H1 (cell line): ENCODE measurements at regions of chr17 and their contacts with region 1.

Region 1: DNA sequence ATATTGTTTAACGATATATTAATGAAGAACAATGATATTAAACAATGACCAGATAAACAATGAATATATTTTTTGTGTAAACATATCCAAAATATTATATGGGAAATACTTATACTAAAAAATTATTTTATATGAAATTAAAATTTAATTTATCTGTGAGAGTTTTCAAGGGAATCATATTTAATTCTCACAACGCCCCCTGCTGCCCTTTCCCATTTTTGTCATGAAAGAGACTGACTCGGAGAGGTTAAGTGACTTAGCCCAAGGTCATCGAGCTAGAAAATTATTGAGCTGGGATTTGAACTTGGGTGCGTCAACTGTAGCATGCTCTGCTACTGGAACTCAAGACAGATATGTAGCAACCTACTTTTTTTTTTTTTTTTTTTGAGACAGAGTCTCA is 7.2 kb upstream of the MYCBPAP start:
- DNase-seq: no peak
- H3K4me3 ChIP-seq: no peak overlapping the region
- H3K27ac ChIP-seq: no peak overlapping the region
- H3K4me1 ChIP-seq: peaks cover 5 to 9% (median 6%) of the 10 kb centered on the region in 4 experiments; a peak in 6 of 7 replicates
- H3K27me3 ChIP-seq: no peaks in the 10 kb centered on the region
- CTCF ChIP-seq: peak in 2 of 3 experiments; percentile 11 to 43; a peak in 2 of 4 replicates
- EP300 ChIP-seq: no peak
- POLR2A ChIP-seq: no peak
- RAD21 ChIP-seq: 0 out of 4 replicates have a peak, but pooled peaks of 1 of the 2 experiments have one; percentile 13

Region 2: GRCh38 chr17:50345432-50346312 is 155.4 kb before region 1 on chr17 and contains the start of gene XYLT2:
- CTCF ChIA-PET with region 1: no interaction called
- POLR2A ChIA-PET with region 1: no interaction called
- DNase-seq: peak in 1 of 2 experiments; percentile 89
- H3K4me3 ChIP-seq: peak within 1 kb of the TSS; percentile 81 to 93 (median 88)
- H3K27ac ChIP-seq: peak within 1 kb of the TSS; percentile 80; the same call in 1 of the 2 replicates
- H3K4me1 ChIP-seq: peaks cover 4 to 17% (median 11%) of the 10 kb centered on the region in 4 experiments
- H3K27me3 ChIP-seq: peaks cover 0 to 9% (median 5%) of the 10 kb centered on the region in 4 experiments; a peak in 4 of 7 replicates
- CTCF ChIP-seq: no peak
- EP300 ChIP-seq: no peak
- POLR2A ChIP-seq: peak; percentile 51 to 60
- RAD21 ChIP-seq: no peak
- total RNA-seq, gene XYLT2: 28.0 and 28.9 TPM in 2 replicates

Region 3: DNA sequence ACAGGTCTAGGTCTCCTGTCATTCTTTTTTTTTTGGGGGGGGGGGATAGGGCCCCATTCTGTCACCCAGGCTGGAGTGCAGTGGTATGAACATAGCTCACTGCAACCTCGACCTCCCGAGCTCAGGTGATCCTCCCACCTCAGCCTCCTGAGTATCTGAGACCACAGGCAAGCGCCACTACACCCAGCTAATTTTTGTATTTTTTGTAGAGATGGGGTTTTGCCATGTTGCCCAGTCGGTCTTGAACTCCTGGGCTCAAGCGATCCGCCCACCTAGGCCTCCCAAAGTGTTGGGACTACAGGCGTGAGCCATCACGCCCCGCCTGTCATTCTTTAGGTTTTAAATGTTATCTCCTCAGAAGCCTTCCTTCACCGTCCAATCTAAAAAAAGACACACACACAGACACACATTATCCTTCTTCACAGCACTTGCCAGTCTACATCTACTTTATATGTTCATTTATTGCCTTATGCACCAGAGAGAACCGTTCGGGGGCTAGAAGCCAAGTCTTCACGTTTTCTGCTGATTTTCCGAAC is 128.8 kb before region 1 on chr17:
- CTCF ChIA-PET with region 1: no interaction called
- POLR2A ChIA-PET with region 1: no interaction called
- DNase-seq: no peak
- H3K4me3 ChIP-seq: peak overlapping the region; percentile 86 to 97 (median 92)
- H3K27ac ChIP-seq: peak overlapping the region; percentile 97
- H3K4me1 ChIP-seq: peaks cover 0 to 9% (median under 1%) of the 10 kb centered on the region in 4 experiments; a peak in 2 of 7 replicates
- H3K27me3 ChIP-seq: no peaks in the 10 kb centered on the region
- CTCF ChIP-seq: no peak
- EP300 ChIP-seq: no peak
- POLR2A ChIP-seq: no peak
- RAD21 ChIP-seq: no peak

Region 4: GRCh38 chr17:50518384-50519230 is 17.6 kb after region 1 on chr17:
- CTCF ChIA-PET with region 1: interaction called, 12 read pairs
- POLR2A ChIA-PET with region 1: interaction called, 5 read pairs
- DNase-seq: no peak
- H3K4me3 ChIP-seq: no peak overlapping the region
- H3K27ac ChIP-seq: no peak overlapping the region
- H3K4me1 ChIP-seq: peaks cover 0 to 2% (median 0%) of the 10 kb centered on the region in 4 experiments; a peak in 2 of 7 replicates
- H3K27me3 ChIP-seq: no peaks in the 10 kb centered on the region; a peak in 1 of 7 replicates
- CTCF ChIP-seq: no peak
- EP300 ChIP-seq: no peak
- POLR2A ChIP-seq: no peak
- RAD21 ChIP-seq: no peak

Region 5: GRCh38 chr17:50527155-50527762 is 26.2 kb after region 1 on chr17:
- CTCF ChIA-PET with region 1: interaction called, 22 read pairs
- POLR2A ChIA-PET with region 1: no interaction called
- DNase-seq: no peak
- H3K4me3 ChIP-seq: no peak overlapping the region
- H3K27ac ChIP-seq: no peak overlapping the region
- H3K4me1 ChIP-seq: peaks cover 3 to 10% (median 6%) of the 10 kb centered on the region in 4 experiments; a peak in 6 of 7 replicates
- H3K27me3 ChIP-seq: peaks cover 0 to 5% (median 0%) of the 10 kb centered on the region in 4 experiments; a peak in 2 of 7 replicates
- CTCF ChIP-seq: no peak
- EP300 ChIP-seq: no peak
- POLR2A ChIP-seq: no peak
- RAD21 ChIP-seq: no peak